Right ventricle myocardium inferior (tissue), 1 donor: ENCODE measurements at regions of chr7 and their contacts with region 1.

Region 1: DNA sequence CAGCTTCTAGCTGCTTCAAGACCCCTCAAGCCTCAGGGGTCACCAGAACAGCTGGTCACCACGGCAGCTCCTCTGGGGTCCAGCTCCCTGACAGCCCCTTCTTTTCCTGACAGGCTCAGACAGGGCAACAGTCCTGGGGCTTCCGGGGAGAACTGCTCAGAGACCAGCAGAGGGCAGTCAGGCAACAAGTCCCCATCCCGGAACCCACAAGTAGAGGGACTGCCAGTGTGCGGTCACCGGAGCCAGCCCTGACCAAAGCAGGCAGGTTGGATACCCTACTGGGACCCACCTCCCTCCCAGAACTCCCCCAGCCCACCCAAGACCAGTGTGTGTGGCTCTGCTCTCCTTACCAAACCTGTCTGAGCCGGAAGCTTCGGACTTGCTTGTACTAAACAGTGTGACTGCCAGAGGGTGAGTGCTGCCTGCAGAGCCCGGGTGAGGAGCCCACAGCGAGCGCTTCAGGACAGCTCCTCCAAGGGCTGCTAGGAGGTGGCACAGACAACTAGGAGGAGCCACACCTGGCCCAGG is 40.3 kb downstream of the YKT6 start:
- DNase-seq: no peak
- ATAC-seq: peak; percentile 84

Region 2: DNA sequence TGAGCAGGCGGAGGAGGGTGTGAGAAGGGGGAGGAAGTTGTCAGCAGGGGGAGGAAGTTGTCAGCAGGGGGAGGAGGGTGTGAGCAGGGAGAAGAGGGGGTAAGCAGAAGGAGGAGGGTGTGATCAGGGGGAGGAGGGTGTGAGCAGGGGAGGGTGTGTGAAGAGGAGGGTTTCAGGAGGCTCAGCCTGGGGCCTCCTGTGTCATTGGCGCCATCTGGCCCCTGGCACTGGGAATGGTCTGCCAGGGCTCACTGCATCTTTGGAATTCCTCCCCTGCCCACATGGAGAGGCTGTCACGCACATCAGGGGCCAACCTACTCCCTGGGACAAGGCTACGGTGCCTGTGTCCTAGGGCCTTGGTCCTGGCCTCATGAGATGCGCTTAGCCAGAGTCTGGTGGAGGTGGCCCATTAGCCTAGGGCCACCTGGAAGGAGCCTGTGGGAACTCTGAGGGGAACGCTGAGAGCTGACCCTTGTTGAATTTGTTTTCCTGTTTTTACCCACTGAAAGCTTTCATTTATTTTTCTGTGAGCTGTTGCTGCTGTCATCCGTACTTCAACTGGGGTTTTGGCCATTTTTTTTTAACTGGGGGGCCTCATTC is 66.4 kb after region 1 on chr7:
- intact Hi-C with region 1: loop called (anchors 2 kb)
- DNase-seq: peak; percentile 73
- ATAC-seq: peak; percentile 68